Activated CD8-positive, alpha-beta T cell treated with anti-CD3 and anti-CD28 coated beads for 36 hours (primary cell): ENCODE measurements at regions of chr19 and their contacts with region 1.

Region 1: GRCh38 chr19:1672038-1672768 is 19.8 kb upstream of the TCF3 start:
- DNase-seq: peak; percentile 65
- ATAC-seq: peak; percentile 54
- H3K4me3 Mint-ChIP-seq: peak overlapping the region; percentile 35
- H3K27ac Mint-ChIP-seq: no peak overlapping the region
- H3K4me1 Mint-ChIP-seq: peaks cover 17% of the 10 kb centered on the region
- H3K27me3 Mint-ChIP-seq: peaks cover 49% of the 10 kb centered on the region
- CTCF ChIP-seq: peak; percentile 99

Region 2: DNA sequence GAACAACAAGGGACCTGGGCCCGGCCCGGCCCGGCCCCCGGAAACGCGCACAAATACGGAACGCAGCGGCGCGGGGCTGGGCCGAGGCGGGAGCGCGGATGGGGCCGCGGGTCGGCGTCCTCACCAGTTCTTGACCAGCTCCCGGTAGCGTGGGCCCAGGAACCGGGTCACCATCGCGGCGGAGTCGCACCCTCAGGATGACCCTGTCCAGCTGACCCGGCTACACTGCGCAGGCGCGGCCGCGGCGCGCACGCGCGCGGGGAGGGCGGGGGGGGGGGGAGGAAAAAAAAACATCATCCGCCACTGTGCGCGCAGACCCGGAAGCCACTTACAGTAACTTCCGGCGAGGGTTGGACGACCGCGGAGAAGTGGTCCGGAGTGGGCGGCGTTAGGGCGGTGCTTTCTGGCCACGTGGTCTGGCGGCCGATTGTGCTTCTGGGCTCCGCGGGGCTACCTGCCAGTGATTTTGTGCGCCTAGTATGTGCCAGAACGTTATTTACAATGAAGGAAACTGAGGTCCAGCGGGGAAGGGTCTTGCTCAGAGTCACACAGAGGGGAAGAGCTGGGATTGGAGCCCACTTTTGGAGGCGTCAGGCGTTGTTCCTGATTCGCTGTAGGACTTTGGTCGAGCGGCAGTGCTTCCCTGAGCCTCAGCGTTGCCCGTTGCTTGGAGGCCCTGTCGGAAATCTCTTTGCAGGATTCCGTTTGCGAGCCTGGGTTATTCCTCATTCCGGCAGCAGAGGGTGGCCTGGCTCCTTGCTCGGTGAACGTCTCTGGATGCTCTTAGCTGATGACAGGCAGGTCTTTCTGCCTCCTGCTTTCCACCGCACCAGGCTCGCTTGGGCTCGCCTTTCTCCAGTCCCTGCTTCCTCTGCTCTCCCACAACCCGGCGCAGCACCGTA is 66.7 kb before region 1 on chr19 and contains the start of gene UQCR11:
- CTCF ChIA-PET with region 1: interaction called, 24 read pairs
- POLR2A ChIA-PET with region 1: no interaction called
- intact Hi-C with region 1: no loop called
- DNase-seq: peak; percentile 97
- ATAC-seq: peak; percentile 90
- H3K4me3 Mint-ChIP-seq: peak within 1 kb of the TSS; percentile 85
- H3K27ac Mint-ChIP-seq: peak within 1 kb of the TSS; percentile 97
- H3K4me1 Mint-ChIP-seq: peaks cover 38% of the 10 kb centered on the region
- H3K27me3 Mint-ChIP-seq: no peaks in the 10 kb centered on the region
- CTCF ChIP-seq: peak; percentile 48
- total RNA-seq, gene UQCR11: 231 TPM

Region 3: DNA sequence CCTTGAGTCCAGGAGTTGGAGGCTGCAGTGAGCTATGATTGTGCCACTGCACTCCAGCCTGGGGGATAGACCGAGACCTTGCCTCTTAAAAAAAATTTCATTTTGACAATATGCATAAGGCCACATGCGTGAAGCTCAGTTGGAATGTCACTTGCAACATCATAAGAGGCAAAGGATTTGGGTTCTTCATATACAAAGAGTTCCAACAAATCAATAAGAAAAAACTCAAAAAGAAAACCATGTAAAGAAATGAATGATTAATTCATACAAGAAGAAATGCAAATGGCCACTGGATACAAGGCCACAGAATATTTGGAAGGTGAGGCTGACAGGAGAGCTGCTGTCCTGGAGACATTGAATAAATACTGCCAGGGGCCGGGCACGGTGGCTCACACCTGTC is 10.2 kb before region 1 on chr19:
- CTCF ChIA-PET with region 1: interaction called, 13 read pairs
- POLR2A ChIA-PET with region 1: no interaction called
- intact Hi-C with region 1: no loop called
- DNase-seq: no peak
- ATAC-seq: no peak
- H3K4me3 Mint-ChIP-seq: no peak overlapping the region
- H3K27ac Mint-ChIP-seq: no peak overlapping the region
- H3K4me1 Mint-ChIP-seq: peaks cover 9% of the 10 kb centered on the region
- H3K27me3 Mint-ChIP-seq: no peaks in the 10 kb centered on the region
- CTCF ChIP-seq: no peak

Region 4: DNA sequence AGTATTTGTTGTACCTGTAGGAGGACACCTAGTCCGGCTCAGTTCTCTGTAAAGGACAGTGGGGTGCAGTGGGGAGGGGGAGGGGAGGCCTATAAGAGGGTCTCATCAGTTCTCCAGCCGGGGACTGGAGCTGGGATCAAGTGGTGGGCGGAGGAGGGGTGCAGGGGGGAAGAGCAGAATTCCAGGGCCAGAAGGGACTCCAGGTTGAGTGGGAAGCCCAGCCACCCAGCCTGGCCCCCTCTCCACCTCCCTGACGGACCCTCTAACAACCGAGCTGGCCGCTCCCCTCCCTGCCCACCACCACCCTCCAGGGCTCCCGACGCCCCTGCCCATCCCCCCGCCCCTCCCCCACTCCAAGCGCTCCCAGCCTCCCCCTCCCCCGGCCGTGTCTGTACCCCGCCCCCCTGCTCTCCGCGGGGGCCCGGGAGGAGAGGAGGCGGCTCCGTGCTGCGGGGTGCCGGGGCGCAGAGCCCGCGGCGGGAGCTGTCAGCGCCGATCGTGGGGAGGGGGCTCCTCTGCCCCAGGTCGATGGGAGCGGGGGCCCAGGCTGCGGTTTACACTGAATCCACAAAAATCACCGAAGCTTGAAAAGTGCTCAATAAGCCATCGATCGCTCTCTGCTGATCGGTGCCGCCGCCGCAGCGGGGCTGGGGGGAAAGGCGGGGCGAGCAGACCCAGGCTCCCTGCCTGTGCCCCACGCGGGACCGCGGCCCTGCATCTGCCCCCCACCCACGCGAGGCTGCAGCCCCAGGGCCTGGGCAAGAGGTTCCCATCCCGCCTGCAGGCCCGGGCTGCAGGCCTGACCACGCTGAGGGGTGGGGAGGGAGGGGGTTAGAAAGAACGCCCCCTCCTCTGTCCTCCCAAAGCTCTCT is 46.5 kb after region 1 on chr19:
- CTCF ChIA-PET with region 1: no interaction called
- POLR2A ChIA-PET with region 1: no interaction called
- intact Hi-C with region 1: no loop called
- DNase-seq: no peak
- ATAC-seq: no peak
- H3K4me3 Mint-ChIP-seq: no peak overlapping the region
- H3K27ac Mint-ChIP-seq: no peak overlapping the region
- H3K4me1 Mint-ChIP-seq: no peaks in the 10 kb centered on the region
- H3K27me3 Mint-ChIP-seq: peaks cover 53% of the 10 kb centered on the region
- CTCF ChIP-seq: no peak

Region 5: GRCh38 chr19:1789261-1790041 is 117.2 kb after region 1 on chr19:
- CTCF ChIA-PET with region 1: interaction called, 10 read pairs
- POLR2A ChIA-PET with region 1: no interaction called
- intact Hi-C with region 1: no loop called
- DNase-seq: no peak
- ATAC-seq: no peak
- H3K4me3 Mint-ChIP-seq: no peak overlapping the region
- H3K27ac Mint-ChIP-seq: no peak overlapping the region
- H3K4me1 Mint-ChIP-seq: peaks cover 4% of the 10 kb centered on the region
- H3K27me3 Mint-ChIP-seq: peaks cover 11% of the 10 kb centered on the region
- CTCF ChIP-seq: no peak